Mammary epithelial cell (primary cell): ENCODE measurements at regions of chr6 and their contacts with region 1.

Region 1: DNA sequence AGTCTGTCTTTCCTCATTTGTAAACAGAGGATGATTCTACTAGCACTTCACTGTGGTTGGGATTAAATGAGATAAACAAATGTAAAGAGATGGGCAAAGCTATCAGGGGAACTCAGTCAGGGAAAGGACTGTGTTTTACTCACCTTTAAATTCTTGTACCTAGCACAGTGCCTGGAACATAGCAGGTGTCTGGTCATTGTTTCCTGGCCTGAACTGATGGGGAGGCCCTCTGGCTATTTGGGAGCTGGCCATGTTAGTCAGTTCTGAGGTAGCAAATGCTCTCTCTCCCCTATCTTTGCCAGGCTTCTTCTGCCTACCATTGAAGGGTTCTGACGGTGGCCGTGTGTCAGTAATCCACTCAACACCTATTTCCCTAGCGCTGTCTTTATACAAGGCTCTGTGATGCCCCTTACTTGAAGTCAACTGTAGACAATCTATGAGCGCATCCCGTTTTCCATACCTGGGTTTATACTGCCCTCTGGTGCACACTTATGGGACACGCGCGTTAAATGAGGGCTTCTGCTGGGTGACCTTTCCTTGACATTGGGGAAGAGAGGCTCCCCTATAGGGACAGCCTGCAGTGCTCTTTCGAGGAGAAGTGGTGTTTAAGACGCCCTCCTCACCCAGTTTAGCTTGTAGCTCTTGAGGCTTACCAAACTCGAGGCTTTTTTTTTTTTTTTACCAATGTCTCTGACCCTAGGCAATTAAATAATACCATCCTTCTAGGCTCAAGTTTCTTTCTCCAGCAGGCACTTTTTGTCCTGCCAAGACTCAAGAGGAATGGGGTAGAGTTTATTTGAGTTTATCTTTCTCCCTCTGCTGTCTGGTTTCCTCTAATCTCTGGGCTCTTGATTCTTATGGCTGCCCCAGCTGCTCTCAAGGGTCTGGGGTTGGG is 4.0 kb upstream of the SPATS1 start:
- DNase-seq: peak; percentile 48
- H3K4me3 ChIP-seq: no peak overlapping the region
- H3K27ac ChIP-seq: no peak overlapping the region
- H3K4me1 ChIP-seq: peaks cover 18% of the 10 kb centered on the region
- H3K27me3 ChIP-seq: peaks cover 2% of the 10 kb centered on the region
- CTCF ChIP-seq: peak; percentile 62 to 82

Region 2: DNA sequence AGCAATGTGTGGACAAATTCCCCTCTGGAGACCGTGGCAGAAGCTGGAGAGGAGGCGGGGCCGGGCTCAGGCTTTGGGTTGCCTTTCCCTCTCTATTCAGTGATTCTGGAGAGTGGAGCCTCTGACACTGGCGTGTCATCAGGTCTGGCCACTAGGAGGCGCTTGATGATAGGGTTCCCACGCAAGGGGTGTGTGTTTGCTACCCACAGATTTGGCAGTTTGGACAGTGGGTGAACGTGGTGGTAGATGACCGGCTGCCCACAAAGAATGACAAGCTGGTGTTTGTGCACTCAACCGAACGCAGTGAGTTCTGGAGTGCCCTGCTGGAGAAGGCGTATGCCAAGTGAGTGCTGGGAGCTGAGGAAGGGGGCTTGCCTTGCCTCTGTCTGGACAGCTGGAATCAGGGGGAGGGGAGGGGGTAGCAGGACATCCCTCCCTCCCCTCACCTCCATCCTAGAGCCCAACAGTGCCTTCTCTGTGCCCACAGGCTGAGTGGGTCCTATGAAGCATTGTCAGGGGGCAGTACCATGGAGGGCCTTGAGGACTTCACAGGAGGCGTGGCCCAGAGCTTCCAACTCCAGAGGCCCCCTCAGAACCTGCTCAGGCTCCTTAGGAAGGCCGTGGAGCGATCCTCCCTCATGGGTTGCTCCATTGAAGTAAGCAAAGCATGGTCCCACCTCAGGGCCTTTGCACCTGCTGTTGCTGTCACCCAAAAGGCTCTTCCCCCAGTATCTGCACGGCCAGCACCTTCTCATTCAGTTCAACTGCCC is 165.6 kb before region 1 on chr6:
- CTCF ChIA-PET with region 1: interaction called, 5 read pairs
- dilution Hi-C with region 1: no loop called
- in situ Hi-C with region 1: no loop called
- intact Hi-C with region 1: loop called (anchors 1 kb)
- DNase-seq: peak; percentile 69
- H3K4me3 ChIP-seq: no peak overlapping the region
- H3K27ac ChIP-seq: no peak overlapping the region
- H3K4me1 ChIP-seq: peaks cover 7% of the 10 kb centered on the region
- H3K27me3 ChIP-seq: no peaks in the 10 kb centered on the region
- CTCF ChIP-seq: peak; percentile 92 to 94

Region 3: DNA sequence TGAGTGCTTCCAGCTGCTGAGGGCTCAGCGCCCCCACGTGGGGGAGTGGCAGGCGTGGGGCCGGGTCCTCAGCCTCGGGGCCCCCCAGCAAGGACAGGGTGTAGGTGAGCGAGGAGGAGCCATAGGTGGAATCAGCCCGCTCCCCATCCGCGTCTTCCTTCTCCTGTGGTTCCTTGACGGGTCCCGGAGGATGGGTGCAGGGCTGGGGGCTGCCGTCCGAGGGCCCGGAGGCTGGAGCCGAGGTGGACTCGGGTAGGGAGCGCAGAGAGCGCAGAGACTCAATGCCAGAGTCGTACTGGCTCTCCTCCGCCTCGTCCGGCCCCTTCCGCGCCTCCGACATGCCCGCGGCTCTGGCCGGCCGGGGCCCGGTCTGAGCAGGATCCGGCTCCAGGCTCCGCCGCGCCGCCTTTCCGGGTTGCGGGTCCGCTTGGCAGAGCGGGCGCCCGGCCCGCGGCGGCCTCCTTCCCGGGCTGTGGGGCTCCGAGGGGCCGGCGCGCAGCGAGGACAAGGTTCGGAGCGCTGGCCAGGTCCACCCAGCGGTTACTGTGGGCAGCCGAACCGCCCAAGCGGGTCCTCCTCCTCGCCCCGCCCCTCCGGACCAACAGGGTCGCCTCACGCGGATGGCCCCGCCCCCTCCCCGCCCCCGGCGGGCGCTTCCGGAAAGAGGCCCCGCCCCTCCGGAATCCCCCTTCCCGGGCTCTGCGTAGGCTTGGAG is 73.3 kb before region 1 on chr6 and contains the start of gene NFKBIE:
- CTCF ChIA-PET with region 1: interaction called, 5 read pairs
- dilution Hi-C with region 1: no loop called
- in situ Hi-C with region 1: loop called in 1 of 2 experiments (anchors 5 kb)
- intact Hi-C with region 1: loop called (anchors 1 kb)
- DNase-seq: peak; percentile 94
- H3K4me3 ChIP-seq: peak within 1 kb of the TSS; percentile 57 to 82 (median 76)
- H3K27ac ChIP-seq: peak within 1 kb of the TSS; percentile 56
- H3K4me1 ChIP-seq: peaks cover 32% of the 10 kb centered on the region
- H3K27me3 ChIP-seq: no peaks in the 10 kb centered on the region
- CTCF ChIP-seq: peak in 1 of 2 donors; percentile 40
- total RNA-seq, gene NFKBIE: 4.7 to 10.4 TPM

Region 4: DNA sequence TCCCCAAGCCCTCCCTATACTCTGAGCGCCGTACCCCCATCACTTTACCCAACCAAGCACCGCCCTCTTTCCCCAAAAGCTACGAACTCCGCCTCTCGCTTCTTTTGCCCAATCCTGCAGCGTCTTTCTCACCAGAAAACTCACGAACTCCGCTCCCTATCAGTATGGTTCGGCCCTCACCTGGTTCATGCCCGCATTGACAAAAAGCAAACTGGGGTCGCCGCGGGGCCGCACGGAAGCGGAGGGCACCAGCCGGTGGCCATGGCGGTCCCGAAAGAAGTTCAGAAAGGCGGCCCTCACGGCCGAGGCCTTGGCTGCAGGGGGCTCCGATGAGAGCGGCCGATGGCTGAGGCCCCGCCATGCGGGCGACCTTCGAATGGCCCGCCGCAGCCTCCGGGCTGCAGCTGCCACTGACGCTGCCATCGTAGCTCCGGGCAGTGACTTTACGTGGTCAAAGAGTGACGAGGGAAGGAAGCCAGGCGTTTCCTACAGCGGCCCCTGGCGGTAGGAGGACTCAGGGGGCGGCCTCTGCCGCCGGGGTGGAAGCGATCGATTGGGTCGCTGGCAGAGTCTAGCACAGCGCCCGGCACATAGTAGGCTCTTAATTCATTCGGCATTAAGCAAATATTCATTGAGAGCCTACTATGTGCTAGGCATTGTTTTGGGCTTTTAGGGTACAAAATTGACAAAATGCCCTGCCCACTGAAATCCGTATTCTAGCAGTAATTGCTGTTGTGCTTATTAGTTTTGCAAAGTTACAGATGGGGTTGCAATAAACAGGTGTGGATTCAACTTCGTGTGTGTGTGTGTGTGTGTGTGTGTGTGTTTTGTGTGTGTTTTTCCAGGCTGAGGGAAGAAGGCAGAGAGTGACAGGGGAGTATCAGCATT is 25.3 kb before region 1 on chr6 and contains the start of gene AARS2:
- CTCF ChIA-PET with region 1: no interaction called
- dilution Hi-C with region 1: no loop called
- in situ Hi-C with region 1: no loop called
- intact Hi-C with region 1: loop called (anchors 2 kb)
- DNase-seq: peak; percentile 76
- H3K4me3 ChIP-seq: peak within 1 kb of the TSS; percentile 58 to 78 (median 75)
- H3K27ac ChIP-seq: peak within 1 kb of the TSS; percentile 50
- H3K4me1 ChIP-seq: peaks cover 26% of the 10 kb centered on the region
- H3K27me3 ChIP-seq: no peaks in the 10 kb centered on the region
- CTCF ChIP-seq: peak; percentile 90 to 99
- total RNA-seq, gene AARS2: 9.2 to 16.8 TPM